Activated B cell treated with CpG ODN at 0.5 μM for 24 hours (primary cell): ENCODE measurements at regions of chr7 and their contacts with region 1.

Region 1: DNA sequence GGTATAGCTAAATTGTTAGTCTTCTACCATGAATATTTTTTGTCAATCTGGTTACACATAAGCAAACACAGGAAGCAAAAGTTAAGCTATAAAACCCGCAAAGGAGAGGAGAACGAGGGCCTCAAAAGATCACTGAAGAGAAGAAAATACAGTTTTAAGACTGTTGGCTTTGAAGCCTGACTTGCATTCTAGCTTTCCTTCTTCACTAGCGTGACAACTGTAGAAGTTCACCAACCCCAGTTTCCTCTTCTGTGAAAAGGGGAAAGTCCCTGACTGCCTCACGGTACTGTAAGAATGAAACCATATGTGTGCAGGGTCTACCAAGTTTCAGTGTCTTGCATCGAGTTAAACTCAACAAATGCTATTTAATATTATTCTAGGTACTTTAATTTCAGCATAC is 7.5 kb upstream of the LRRN3 start:
- DNase-seq: no peak
- ATAC-seq: peak; percentile 96
- H3K4me3 Mint-ChIP-seq: peak overlapping the region; percentile 59
- H3K27ac Mint-ChIP-seq: peak overlapping the region; percentile 90
- H3K4me1 Mint-ChIP-seq: peaks cover 48% of the 10 kb centered on the region
- H3K27me3 Mint-ChIP-seq: no peaks in the 10 kb centered on the region
- CTCF ChIP-seq: no peak

Region 2: DNA sequence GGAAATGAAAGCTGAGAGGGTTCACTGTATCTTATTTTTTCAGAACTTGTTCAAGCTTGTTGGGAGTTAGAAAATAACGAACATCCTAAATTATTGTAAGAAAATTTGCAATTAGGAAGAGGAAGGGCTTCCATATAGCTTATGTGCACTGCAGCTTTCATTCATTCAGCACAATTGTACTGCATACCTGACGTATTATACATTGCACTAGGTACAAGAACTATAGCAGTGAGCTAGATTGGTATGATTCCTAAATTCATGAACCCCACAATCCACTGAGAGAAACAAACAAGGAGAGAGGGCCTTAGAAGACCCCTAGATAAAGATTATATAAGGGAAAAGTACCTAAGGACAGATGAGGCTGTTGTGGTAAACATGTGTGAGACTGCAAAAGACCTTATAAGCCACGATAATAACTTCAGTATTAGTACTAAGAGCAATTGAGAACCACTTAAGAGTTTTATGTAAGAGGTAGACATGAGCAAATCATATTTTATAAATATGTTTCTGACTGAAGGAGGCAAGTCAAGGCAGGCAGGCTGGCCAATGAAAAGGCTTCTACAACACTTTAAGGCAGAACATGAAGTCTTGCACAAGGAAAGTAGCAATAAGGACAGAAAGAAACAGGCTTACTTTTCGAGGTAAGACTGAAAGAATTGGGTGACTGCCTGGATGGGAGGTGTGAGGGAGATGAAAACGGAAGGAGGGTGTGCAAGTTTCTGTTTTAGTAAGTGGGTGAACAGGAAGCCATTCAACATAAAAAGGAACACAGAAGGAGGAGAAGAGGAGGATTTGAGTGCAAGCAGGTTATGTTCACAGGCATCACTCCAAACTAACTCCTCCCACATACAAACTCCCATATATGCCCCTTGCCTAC is 70.4 kb before region 1 on chr7:
- CTCF ChIA-PET with region 1: no interaction called
- POLR2A ChIA-PET with region 1: no interaction called
- intact Hi-C with region 1: loop called (anchors 2 kb)
- DNase-seq: no peak
- ATAC-seq: peak; percentile 90
- H3K4me3 Mint-ChIP-seq: peak overlapping the region; percentile 50
- H3K27ac Mint-ChIP-seq: peak overlapping the region; percentile 77
- H3K4me1 Mint-ChIP-seq: peaks cover 26% of the 10 kb centered on the region
- H3K27me3 Mint-ChIP-seq: no peaks in the 10 kb centered on the region
- CTCF ChIP-seq: no peak

Region 3: DNA sequence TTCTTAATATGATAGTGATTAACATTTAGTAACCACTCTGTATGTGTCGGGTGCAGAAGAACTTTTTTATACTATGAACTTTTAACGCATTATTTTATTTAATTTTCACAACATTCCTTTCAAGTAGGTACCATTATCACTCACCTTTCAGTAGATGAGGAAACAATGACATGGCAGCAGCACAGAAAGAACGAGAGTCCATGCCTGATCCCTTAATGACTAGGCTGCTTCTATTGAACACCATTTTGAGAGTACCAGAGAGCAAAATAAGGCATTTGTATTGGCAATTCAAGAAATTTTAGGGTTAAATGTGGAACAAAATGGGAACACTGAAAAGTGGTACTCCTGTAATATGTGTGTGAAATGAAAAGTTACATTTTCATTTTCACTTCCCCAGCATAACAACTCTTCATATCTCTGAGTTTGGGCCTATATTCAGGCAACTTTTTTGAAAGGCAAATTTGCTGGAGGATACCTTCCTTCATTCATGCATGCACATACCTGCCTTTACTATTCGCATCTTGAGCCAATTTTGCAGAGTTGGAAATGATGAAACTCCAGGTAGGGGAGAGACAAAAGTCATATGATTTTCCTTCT is 20.4 kb after region 1 on chr7:
- CTCF ChIA-PET with region 1: interaction called, 9 read pairs
- POLR2A ChIA-PET with region 1: no interaction called
- intact Hi-C with region 1: loop called (anchors 2 kb)
- DNase-seq: no peak
- ATAC-seq: peak; percentile 52
- H3K4me3 Mint-ChIP-seq: peak overlapping the region; percentile 39
- H3K27ac Mint-ChIP-seq: peak overlapping the region; percentile 86
- H3K4me1 Mint-ChIP-seq: peaks cover 35% of the 10 kb centered on the region
- H3K27me3 Mint-ChIP-seq: no peaks in the 10 kb centered on the region
- CTCF ChIP-seq: no peak

Region 4: DNA sequence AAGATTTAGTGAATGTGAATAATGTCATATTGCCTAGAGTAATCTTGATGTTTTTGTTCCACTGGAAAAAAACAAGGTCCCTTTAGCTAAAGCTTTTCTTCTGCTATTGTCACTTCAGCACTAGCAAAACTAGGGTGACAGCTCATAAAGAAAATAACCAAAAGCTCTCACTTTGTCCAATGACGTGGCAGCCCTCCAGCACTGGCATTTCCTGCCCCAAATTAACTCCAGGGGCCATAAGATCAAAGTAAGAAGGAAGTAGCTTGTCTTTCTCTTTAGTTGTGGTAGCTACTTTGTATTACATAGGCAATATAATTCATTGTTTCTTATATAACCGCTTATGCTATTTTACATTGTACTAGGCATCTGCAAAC is 54.8 kb after region 1 on chr7:
- CTCF ChIA-PET with region 1: interaction called, 5 read pairs
- POLR2A ChIA-PET with region 1: interaction called, 24 read pairs
- intact Hi-C with region 1: loop called (anchors 1 kb)
- DNase-seq: peak; percentile 16
- ATAC-seq: peak; percentile 77
- H3K4me3 Mint-ChIP-seq: peak overlapping the region; percentile 73
- H3K27ac Mint-ChIP-seq: peak overlapping the region; percentile 94
- H3K4me1 Mint-ChIP-seq: peaks cover 28% of the 10 kb centered on the region
- H3K27me3 Mint-ChIP-seq: no peaks in the 10 kb centered on the region
- CTCF ChIP-seq: no peak

Region 5: GRCh38 chr7:111324228-111324627 is 240.8 kb after region 1 on chr7:
- CTCF ChIA-PET with region 1: no interaction called
- POLR2A ChIA-PET with region 1: no interaction called
- intact Hi-C with region 1: loop called (anchors 5 kb)
- DNase-seq: no peak
- ATAC-seq: peak; percentile 71
- H3K4me3 Mint-ChIP-seq: peak overlapping the region; percentile 19
- H3K27ac Mint-ChIP-seq: peak overlapping the region; percentile 66
- H3K4me1 Mint-ChIP-seq: peaks cover 38% of the 10 kb centered on the region
- H3K27me3 Mint-ChIP-seq: no peaks in the 10 kb centered on the region
- CTCF ChIP-seq: no peak